Activated CD4-positive, alpha-beta T cell treated with anti-CD3 and anti-CD28 coated beads, Interleukin-2, amount 10 ng/mL, durations not matched to agents 7 days and 5 days (primary cell): ENCODE measurements at regions of chr16 and their contacts with region 1.

Region 1: GRCh38 chr16:11133344-11133943 is 122.6 kb downstream of the SOCS1 start:
- DNase-seq: no peak
- H3K4me3 Mint-ChIP-seq: no peak overlapping the region
- H3K27ac Mint-ChIP-seq: no peak overlapping the region
- H3K4me1 Mint-ChIP-seq: peaks cover 84% of the 10 kb centered on the region
- H3K27me3 Mint-ChIP-seq: no peaks in the 10 kb centered on the region

Region 2: GRCh38 chr16:11145173-11145818 is 11.9 kb after region 1 on chr16:
- CTCF ChIA-PET with region 1: interaction called, 18 read pairs
- POLR2A ChIA-PET with region 1: no interaction called
- DNase-seq: no peak
- H3K4me3 Mint-ChIP-seq: no peak overlapping the region
- H3K27ac Mint-ChIP-seq: no peak overlapping the region
- H3K4me1 Mint-ChIP-seq: peaks cover 37% of the 10 kb centered on the region
- H3K27me3 Mint-ChIP-seq: no peaks in the 10 kb centered on the region

Region 3: DNA sequence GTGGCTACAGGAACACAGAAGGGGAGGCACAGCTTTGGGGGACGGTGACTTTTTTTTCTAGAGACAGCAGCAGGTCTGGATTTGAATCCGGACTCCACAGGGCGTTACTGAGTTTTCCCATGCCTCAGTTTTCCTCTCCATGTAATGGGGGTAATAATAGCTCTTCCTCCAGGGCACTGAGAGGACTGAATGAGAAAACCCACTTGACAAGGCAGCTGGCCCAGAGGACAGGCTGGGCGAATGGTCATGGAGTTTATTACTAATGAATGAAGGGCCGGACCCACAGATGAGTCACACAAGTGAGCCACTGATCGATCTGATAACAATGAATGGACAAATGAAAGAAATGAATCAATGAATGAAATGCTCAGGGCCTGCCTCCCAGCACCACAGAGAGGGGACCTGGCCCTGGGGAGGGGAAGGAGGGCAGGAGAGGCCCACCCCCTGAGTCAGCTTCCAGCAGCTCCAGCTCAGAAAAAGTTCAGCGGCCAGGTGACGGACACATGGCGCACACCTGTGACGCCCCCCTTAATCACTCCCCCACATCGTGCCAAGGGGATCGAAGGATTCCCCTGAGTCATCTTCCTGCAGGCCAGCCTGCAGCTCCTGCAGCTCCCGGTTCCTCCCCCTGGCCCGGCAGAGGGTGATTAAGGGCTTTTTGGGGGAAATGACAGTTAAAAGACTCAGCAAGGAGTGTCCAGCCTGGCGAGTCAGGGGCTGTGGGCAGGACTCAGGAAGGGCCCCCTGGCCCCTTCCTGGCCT is 68.2 kb after region 1 on chr16:
- CTCF ChIA-PET with region 1: no interaction called
- POLR2A ChIA-PET with region 1: no interaction called
- DNase-seq: no peak
- H3K4me3 Mint-ChIP-seq: no peak overlapping the region
- H3K27ac Mint-ChIP-seq: no peak overlapping the region
- H3K4me1 Mint-ChIP-seq: peaks cover 58% of the 10 kb centered on the region
- H3K27me3 Mint-ChIP-seq: no peaks in the 10 kb centered on the region

Region 4: GRCh38 chr16:11255737-11256660 is 122.6 kb after region 1 on chr16 and contains the start of gene SOCS1:
- CTCF ChIA-PET with region 1: no interaction called
- POLR2A ChIA-PET with region 1: no interaction called
- DNase-seq: peak; percentile 87
- H3K4me3 Mint-ChIP-seq: peak within 1 kb of the TSS; percentile 96
- H3K27ac Mint-ChIP-seq: peak within 1 kb of the TSS; percentile 97
- H3K4me1 Mint-ChIP-seq: peaks cover 53% of the 10 kb centered on the region
- H3K27me3 Mint-ChIP-seq: no peaks in the 10 kb centered on the region
- total RNA-seq, gene SOCS1: 127 to 133 TPM